Posterior vena cava (tissue), 2 donors: ENCODE measurements at regions of chr22 and their contacts with region 1.

Region 1: DNA sequence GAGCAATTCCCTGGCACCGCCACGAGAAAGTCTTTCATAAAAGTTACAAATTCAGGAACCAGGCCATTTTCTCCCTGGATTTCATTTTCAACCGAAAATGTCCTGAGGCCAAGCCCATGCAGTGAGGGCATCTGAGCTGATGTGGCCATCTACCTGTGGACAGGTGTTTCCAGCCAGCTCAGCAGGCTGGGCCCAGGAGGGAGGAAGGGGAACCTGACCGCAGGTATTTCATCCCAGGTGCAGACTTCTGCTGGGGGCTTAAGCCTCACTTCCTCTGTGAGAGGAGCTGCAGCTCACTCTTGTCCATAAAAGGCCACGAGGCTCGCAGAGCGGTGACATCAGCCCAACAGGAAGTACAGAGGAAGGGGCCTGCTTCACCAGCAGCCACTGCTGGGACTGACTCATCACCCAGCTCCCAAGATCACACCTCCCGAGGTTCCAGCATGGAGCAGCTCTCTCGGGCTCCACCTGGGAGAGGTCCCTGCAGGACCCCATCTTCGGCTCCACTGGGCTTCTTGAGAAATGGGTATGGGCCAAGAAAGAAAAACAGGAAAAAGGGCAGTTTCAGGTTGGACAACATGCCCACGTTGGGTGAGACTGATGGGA is 56.4 kb downstream of the MYH9 start:
- DNase-seq: peak; percentile 95

Region 2: GRCh38 chr22:34950489-34950888 is 1380.9 kb before region 1 on chr22:
- intact Hi-C with region 1: no loop called
- DNase-seq: no peak

Region 3: DNA sequence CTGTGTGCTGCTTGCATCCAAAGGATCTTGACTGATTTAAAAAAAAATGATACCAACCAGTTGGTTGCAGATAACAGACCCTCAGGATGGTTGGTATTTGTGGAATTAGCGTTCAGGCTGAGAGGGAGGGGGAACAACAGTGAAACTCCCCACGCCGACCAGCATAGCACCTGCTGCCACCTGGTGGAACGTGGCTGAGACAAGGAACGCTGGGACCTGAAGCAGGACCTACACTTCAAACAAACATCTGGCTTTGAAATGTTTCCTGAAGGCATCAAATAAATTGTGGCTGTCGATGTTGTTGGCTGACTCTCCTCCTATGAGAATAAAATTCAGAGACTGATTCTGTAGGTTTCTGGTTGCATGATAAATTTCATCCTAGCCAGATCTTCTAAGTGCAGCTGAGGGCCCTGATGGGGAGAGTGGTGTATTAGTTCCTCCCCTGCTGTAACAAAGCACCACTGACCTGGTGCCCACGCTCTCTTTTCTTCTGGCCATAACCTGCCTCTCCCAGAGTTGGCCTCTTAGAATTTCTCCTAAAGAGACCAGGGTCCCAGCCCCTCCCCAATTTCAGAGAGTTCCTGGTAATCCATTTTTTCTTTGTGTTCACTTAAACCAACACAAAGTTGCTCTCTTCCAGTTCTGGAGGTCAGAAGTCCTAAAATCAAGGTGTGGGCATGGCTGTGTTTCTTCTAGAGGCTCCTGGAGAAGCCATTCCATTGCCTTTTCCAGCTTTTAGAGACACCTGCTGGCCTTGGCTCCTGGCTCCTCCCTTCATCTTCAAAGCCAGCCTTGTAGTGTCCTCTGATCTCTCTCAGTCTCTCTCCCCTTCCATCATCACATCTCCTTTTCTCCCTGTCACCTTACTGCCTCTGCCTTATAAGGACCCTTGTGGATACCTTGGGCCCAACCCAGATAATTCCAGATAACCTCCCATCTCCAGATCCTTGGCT is 109.3 kb before region 1 on chr22:
- intact Hi-C with region 1: no loop called
- DNase-seq: no peak

Region 4: DNA sequence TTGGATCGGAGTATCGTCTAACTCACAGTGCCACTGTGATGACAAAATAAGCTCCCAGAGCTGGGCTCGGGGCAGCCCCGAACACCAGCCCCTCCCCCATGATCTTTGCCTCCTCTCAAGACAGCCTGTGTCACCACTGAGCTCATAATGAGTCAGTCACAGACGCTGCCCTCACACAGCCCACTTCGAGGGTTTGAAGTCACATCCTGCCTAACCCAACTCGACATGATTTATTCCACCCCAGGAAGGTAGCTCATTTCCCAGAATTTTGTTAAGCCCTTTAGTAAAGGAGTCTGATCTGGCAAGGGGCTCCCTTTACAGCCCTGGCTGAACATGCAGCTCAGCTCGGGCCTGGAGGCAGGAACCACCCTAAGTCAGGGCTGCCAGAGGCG is 33.6 kb after region 1 on chr22:
- intact Hi-C with region 1: loop called in 1 of 2 experiments (anchors 5 kb)
- DNase-seq: peak; percentile 93

Region 5: DNA sequence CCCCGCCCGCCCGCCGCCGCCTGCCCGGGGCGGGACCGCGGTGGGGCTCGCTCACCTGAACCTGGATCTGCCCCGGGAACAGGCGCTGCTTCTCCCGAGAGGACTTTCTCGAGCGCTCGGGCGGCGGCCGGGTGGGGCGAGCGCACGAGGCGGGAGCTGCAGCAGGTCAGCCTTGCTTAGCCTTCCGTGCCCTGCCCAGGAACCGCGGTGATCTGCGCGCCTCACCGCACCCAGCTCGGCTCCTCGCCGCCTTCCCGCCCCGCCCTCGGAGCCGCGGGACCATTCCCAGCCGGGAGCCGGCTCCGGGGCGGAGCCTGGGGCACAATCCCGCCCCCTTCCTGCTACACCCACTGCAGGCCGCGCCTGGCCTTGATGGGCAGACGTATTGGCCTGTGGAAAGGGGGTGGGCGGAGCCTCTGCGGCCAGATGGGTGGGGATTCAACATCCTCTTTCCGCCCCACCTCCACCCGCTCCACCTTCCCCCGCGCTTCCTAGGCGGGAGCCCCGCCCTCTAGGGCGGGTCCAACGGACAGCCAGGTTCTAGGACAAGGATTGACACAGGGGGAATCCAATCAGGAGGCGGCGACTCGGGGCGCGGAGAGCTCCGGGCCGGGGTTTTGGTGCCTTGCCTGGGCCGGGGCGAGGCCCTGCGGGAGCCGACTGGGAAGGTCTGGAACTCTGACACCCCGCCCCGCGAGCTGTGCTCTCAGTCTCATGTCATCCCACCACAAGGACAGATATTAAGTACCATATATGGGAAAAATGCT is 56.5 kb after region 1 on chr22 and contains the start of gene MYH9:
- intact Hi-C with region 1: loop called in 1 of 2 experiments (anchors 5 kb)
- DNase-seq: peak; percentile 100
- total RNA-seq, gene MYH9: 831 to 938 TPM

Region 6: GRCh38 chr22:37088108-37088605 is 756.7 kb after region 1 on chr22:
- intact Hi-C with region 1: no loop called
- DNase-seq: no peak

Region 7: GRCh38 chr22:37887610-37888378 is 1556.4 kb after region 1 on chr22:
- intact Hi-C with region 1: loop called in 1 of 2 experiments (anchors 10 kb)
- DNase-seq: no peak